Activated CD4-positive, alpha-beta T cell treated with anti-CD3 and anti-CD28 coated beads, Interleukin-2, amount 10 ng/mL, durations not matched to agents 24 days and 14 days (primary cell): ENCODE measurements at regions of chr6 and their contacts with region 1.

Region 1: DNA sequence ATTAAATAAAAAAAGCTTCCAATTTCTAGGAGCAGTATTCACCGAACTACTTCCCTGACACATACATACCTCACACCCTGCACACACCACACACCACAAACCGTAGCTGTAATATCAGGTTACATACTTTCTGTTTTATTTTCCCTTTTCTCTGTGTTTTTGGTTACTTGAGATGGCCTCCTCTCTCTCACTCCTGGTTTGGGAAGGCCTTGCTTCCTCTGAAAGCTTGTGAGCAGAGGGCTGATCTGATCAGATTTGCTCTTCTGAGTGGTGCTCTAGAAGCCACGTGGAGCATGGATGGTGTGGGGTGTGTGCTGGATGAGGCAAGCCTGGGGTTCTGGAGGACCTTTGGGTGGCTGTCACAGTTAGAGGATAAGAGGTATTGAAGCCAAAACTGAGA is 20.9 kb downstream of the UTRN start:
- DNase-seq: peak; percentile 81
- H3K4me3 Mint-ChIP-seq: peak overlapping the region; percentile 63
- H3K27ac Mint-ChIP-seq: peak overlapping the region; percentile 82
- H3K4me1 Mint-ChIP-seq: peaks cover 33% of the 10 kb centered on the region
- H3K27me3 Mint-ChIP-seq: peaks cover 10% of the 10 kb centered on the region

Region 2: GRCh38 chr6:144248476-144249301 is 57.3 kb before region 1 on chr6:
- intact Hi-C with region 1: loop called (anchors 2 kb)
- DNase-seq: peak; percentile 60
- H3K4me3 Mint-ChIP-seq: no peak overlapping the region
- H3K27ac Mint-ChIP-seq: peak overlapping the region; percentile 58
- H3K4me1 Mint-ChIP-seq: peaks cover 14% of the 10 kb centered on the region
- H3K27me3 Mint-ChIP-seq: peaks cover 6% of the 10 kb centered on the region

Region 3: DNA sequence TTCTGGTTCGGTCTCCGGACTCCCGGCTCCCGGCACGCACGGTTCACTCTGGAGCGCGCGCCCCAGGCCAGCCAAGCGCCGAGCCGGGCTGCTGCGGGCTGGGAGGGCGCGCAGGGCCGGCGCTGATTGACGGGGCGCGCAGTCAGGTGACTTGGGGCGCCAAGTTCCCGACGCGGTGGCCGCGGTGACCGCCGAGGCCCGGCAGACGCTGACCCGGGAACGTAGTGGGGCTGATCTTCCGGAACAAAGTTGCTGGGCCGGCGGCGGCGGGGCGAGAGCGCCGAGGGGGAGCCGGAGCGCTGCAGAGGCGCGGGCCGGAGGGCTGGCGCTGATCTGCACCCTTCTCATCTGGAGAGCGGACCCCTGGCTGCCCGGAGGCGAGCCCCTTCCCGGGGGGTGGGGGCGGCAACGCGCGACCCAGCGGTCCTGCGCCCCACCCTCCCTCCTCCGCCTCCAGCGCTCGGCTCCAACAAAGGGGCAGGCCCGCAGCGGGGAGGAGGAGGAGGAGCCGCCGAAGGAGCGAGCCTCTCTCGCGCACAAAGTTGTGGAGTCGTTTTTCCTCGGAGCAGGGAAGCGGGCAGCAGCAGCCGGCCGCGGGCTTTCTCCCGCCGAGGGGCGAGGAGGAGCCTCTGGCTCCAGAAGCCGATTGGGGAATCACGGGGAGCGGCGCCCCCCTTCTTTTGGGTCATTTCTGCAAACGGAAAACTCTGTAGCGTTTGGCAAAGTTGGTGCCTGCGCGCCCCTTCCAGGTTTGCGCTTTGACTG is 21.0 kb before region 1 on chr6 and contains the start of gene UTRN:
- intact Hi-C with region 1: loop called (anchors 2 kb)
- DNase-seq: peak; percentile 84
- H3K4me3 Mint-ChIP-seq: peak within 1 kb of the TSS; percentile 91
- H3K27ac Mint-ChIP-seq: peak within 1 kb of the TSS; percentile 88
- H3K4me1 Mint-ChIP-seq: peaks cover 16% of the 10 kb centered on the region
- H3K27me3 Mint-ChIP-seq: peaks cover 39% of the 10 kb centered on the region
- total RNA-seq, gene UTRN: 36.7 and 45.1 TPM in 2 replicates

Region 4: GRCh38 chr6:144320741-144321140 is 14.8 kb after region 1 on chr6:
- intact Hi-C with region 1: loop called (anchors 1 kb)
- DNase-seq: no peak
- H3K4me3 Mint-ChIP-seq: no peak overlapping the region
- H3K27ac Mint-ChIP-seq: no peak overlapping the region
- H3K4me1 Mint-ChIP-seq: peaks cover 14% of the 10 kb centered on the region
- H3K27me3 Mint-ChIP-seq: peaks cover 8% of the 10 kb centered on the region

Region 5: GRCh38 chr6:144334131-144334708 is 28.2 kb after region 1 on chr6:
- intact Hi-C with region 1: loop called (anchors 1 kb)
- DNase-seq: peak; percentile 85
- H3K4me3 Mint-ChIP-seq: peak overlapping the region; percentile 79
- H3K27ac Mint-ChIP-seq: peak overlapping the region; percentile 82
- H3K4me1 Mint-ChIP-seq: peaks cover 43% of the 10 kb centered on the region
- H3K27me3 Mint-ChIP-seq: no peaks in the 10 kb centered on the region

Region 6: GRCh38 chr6:144343701-144344428 is 37.9 kb after region 1 on chr6:
- intact Hi-C with region 1: loop called (anchors 1 kb)
- DNase-seq: peak; percentile 84
- H3K4me3 Mint-ChIP-seq: peak overlapping the region; percentile 89
- H3K27ac Mint-ChIP-seq: peak overlapping the region; percentile 96
- H3K4me1 Mint-ChIP-seq: peaks cover 59% of the 10 kb centered on the region
- H3K27me3 Mint-ChIP-seq: no peaks in the 10 kb centered on the region

Region 7: DNA sequence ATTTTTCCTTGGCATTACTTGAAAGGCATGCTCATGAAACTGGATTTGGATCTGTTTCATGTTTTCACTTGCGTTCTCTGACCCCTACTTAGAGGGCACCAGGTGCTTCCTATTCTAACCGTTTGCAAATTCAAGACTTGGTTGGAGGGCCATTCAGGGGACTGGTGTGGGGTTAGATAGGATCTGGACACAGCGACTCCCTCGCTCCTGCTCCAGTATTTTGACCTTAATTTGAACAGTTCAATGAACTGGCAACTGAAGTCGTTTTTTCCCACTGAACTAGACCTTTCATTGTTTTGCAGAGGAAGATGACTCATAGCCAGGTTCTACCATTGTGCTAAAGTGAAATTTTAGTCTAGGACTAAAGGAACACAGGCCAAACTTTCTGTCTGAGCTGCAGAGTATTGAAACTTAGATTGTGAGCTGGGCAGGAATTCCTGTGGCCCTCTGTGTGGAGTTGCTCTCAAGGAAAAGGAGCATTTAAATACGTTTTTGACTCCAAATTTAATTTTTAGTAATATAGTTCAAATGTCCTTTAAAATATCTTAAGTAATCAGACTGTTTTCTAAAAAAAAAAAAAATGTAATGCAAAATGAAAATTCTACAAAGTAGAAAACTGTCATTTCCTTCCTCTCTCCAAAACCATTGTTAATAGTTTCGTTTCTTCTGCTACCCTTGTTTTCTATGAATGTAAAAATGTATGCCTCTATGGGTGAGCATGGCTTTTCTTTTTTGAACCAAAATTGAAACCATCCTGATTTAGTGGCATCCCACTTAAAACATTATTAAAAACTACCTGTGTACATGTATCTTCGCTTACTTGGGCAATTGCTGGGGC is 43.9 kb after region 1 on chr6:
- intact Hi-C with region 1: loop called (anchors 2 kb)
- DNase-seq: peak; percentile 78
- H3K4me3 Mint-ChIP-seq: peak overlapping the region; percentile 80
- H3K27ac Mint-ChIP-seq: peak overlapping the region; percentile 92
- H3K4me1 Mint-ChIP-seq: peaks cover 74% of the 10 kb centered on the region
- H3K27me3 Mint-ChIP-seq: no peaks in the 10 kb centered on the region